Cardiac septum (tissue), 1 donor: ENCODE measurements at regions of chr2 and their contacts with region 1.

Region 1: GRCh38 chr2:118003396-118003824 is 10.5 kb downstream of the CCDC93 start:
- DNase-seq: no peak

Region 2: DNA sequence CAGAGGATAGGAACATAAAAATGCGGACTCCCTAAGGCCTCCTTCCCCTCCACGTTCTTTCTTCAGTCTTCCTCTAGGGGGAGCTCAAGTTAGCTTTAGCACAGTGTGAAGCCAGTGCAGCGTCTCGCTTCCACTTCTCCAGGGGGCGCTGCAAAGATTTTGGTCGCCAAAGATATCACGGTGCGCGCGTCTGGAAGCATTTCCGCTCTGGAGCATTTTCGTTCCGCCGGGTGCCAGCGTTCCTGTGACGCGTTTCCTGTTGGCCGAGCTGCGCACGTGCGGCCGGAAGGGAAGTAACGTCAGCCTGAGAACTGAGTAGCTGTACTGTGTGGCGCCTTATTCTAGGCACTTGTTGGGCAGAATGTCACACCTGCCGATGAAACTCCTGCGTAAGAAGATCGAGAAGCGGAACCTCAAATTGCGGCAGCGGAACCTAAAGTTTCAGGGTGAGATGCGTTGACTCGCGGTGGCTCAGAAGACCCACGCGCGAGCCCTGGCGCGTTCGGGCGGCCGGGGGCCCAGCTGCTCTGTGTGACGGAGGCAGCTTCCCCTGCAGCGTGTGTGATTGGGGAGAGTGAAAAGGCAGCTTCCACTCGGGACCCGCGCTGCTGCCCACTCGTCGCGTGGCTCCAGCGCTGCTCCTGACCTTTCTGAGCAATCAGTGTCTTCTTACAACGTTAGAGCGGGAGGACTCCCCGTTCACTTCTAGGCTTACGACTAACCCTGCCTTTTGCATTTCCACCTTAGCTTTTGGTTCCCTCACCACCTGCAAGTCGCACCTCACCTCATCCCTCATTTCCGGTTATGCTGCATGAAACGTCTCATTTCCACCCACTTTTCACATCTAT is 188.8 kb before region 1 on chr2 and contains the start of gene DDX18:
- intact Hi-C with region 1: loop called (anchors 5 kb)
- DNase-seq: peak; percentile 98
- total RNA-seq, gene DDX18: 32.4 TPM

Region 3: DNA sequence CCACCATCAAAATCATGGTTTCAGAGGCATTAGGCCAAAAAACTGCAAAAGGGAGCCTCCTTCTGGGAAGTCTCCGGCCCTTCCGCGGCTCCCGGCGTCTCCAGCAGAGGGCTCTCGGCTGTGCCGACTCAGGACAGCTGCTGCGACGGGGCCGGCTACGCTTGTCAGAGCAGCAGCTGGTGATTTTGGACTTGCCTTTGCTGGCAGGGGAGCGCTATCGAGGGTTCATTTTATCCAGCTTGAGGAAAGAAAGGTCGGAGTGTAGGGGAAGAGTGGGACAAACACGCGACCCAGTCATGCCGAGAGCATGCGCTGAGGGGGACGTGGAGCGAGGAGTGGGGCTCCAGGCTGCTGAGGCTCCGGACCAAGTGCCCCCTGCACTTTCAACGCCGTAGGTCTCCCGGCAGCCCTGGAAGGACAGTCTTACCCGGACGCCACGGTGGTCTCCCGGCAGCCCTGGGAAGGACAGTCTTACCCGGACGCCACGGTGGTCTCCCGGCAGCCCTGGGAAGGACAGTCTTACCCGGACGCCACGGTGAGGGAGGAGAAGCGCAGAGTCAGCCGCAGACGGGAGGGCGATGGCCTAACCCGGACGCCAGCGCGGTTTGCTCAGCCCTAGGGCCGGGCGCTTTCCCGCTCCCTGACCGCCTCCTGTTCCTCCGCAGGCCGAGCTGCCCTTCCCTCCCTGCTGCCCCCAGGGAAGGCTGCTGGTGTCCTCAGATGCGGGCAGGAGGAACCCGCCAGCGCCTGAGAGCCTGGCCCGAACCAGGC is 167.2 kb before region 1 on chr2:
- intact Hi-C with region 1: loop called (anchors 1 kb)
- DNase-seq: peak; percentile 89

Region 4: DNA sequence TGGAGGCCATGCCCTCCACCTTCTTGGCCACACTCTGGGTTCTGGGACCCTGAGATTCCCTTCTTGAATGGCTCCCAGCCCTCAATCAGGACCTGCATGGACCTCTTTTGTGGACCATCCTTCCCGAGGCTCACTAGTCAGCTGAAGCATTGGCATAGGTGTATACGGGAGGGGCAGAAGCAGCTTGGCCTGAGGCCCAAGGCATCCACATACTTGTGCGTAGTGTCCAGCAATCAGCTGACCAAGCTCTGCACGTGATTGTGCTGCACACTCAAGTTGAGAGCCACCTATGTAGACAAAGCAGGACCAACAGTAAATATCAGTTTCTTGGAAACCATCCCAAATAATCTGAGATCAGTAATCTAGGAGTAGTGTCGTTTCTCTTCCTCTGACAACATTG is 204.5 kb after region 1 on chr2:
- intact Hi-C with region 1: no loop called
- DNase-seq: no peak

Region 5: GRCh38 chr2:118221666-118222594 is 218.5 kb after region 1 on chr2:
- intact Hi-C with region 1: no loop called
- DNase-seq: no peak